H1 (cell line): ENCODE measurements at regions of chr9 and their contacts with region 1.

Region 1: GRCh38 chr9:121692606-121693387 is 41.4 kb downstream of the DAB2IP start:
- DNase-seq: no peak
- H3K4me3 ChIP-seq: no peak overlapping the region
- H3K27ac ChIP-seq: no peak overlapping the region
- H3K4me1 ChIP-seq: peaks cover 2 to 8% (median 5%) of the 10 kb centered on the region in 4 experiments; a peak in 6 of 7 replicates
- H3K27me3 ChIP-seq: no peaks in the 10 kb centered on the region; a peak in 3 of 7 replicates
- CTCF ChIP-seq: no peak
- EP300 ChIP-seq: no peak
- POLR2A ChIP-seq: no peak
- RAD21 ChIP-seq: no peak

Region 2: DNA sequence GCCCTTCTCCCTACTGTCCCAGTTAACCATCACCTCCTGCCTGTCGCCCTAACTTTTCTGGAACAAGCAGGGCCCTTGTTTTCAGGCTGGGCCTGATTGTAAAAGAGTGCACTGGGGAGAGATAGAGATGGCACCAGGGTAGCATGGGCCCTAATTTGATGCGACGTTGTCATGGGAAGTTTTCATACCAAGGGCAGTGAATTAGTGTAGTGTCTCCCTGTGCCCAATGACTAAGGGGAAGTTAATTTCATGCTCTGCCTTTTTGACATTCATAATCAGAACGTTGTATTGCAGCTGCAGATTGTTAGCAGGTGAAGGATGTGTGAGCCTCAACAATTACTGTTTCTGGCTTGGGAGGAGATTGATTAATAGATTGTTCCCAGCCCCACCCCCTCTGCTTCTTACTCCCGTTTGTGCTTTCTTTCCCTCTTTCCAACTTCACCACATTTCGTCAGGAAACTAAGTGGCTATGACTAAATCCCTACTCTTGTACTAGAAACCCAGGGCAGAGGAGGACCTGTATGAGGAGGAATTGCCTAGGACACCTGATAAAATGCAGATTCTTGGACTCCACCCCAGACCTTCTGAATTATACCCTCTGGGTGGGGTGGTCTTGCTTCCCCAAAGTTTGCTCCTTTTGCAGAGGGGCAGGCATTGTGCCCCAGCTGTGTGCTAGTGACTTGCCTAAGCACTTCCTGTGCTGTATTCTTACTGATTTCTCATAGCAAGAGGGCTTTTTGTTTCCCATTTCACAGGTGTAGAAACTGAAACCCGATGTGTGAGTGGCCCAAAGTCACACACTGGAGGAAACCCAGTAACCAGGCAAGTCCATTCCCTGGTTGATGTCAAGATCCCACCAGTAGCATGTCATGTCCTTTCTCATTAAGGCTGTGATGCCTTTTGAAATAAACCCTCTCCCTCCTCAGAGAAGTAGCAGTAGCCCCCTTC is 15.0 kb after region 1 on chr9:
- CTCF ChIA-PET with region 1: interaction called, 30 read pairs
- POLR2A ChIA-PET with region 1: no interaction called
- DNase-seq: no peak
- H3K4me3 ChIP-seq: no peak overlapping the region
- H3K27ac ChIP-seq: no peak overlapping the region; the same call in 1 of the 2 replicates
- H3K4me1 ChIP-seq: peaks cover 10 to 21% (median 12%) of the 10 kb centered on the region in 4 experiments; a peak in 6 of 7 replicates
- H3K27me3 ChIP-seq: no peaks in the 10 kb centered on the region
- CTCF ChIP-seq: no peak
- EP300 ChIP-seq: no peak
- POLR2A ChIP-seq: no peak
- RAD21 ChIP-seq: no peak